B cell (primary cell): ENCODE measurements at regions of chr4 and their contacts with region 1.

Region 1: DNA sequence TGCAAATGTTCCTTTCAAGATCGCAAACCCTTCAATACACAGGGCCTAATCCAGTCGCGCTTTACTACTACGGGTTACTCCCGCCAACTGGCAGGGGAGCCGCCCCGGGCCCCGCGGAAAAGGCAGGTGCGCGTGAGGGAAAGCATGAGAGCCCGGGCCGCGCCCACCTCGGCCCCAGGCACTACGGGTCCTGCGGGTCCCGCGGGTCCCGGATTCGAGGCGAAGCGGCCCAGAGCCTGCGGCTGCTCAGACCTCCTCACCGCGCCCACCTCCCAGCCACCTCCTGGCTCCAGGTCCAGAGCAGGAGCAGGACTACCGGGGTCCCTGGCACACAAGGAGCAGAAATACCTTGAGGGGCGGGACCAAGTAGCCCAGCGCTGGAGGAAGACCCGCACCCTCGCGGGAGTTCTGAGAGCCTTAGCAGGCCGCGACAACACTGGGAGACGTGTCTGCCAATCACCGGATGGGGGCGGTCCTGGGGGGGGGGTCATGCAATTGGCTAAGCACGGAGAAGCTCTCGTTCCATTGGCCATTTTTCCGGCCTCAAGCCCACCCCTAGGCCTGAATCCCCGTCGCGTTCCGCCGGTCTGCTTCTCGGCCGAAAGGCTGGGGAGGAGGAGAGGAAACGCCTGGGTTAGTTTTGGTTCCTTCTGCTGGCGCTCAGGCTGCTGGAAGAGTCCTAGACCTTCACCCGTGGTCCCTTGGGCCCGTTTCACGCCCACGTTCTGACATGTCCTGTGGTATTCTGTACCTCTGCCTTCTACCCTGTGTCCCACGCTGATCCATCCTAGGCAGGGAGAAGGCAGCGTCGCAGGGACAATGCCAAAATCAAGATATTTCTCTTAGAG is 29.0 kb downstream of the ERVMER34-1 start:
- DNase-seq: peak; percentile 96
- ATAC-seq: peak; percentile 92
- H3K4me3 ChIP-seq: peak overlapping the region; percentile 57 to 89 (median 73)
- H3K4me3 Mint-ChIP-seq: peak overlapping the region; percentile 91
- H3K27ac ChIP-seq: peak overlapping the region; percentile 78 to 83
- H3K27ac Mint-ChIP-seq: peak overlapping the region; percentile 92
- H3K4me1 ChIP-seq: peaks cover 4 to 13% of the 10 kb centered on the region in 2 donors
- H3K4me1 Mint-ChIP-seq: peaks cover 16% of the 10 kb centered on the region
- H3K27me3 ChIP-seq: no peaks in the 10 kb centered on the region
- H3K27me3 Mint-ChIP-seq: no peaks in the 10 kb centered on the region
- CTCF ChIP-seq: no peak

Region 2: DNA sequence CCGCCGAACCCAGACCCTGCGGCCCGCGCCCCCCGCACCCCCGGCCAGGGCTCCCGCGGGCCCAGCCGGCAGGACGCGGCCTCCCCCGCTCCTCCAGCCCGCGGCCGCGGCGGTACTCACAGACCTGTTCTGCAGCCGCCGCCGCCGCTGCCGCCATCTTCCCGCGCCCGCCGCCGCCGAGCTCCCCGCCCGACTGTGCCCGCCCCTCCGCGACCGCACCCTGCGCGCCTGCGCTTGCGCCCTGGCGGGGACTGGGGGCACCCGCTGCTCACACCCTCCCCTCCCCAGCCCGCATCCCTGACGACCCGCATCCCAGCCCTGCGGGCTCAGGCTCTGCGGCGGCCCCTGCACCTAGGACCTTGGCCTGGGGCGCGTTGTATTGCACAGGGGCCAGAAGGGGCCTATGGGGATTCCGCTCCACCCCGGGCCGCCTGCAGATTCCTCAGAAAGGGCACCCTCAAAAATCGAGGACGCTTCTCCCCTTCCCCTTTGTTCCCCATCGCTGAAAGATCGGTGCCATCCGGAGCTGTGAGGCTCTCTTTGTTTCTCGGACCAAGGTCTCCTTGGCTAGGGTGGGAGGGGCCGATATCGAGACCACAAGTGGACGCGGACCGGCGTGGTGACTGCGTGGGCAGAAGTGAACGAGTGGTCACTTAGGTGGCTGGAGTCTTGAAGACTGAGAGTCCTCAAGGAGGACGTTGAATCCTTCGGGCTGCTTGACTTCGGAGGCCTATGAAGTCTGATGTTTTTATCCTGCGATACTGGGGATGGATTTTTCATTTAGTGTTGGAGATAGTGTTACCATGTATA is 683.9 kb before region 1 on chr4 and contains the start of gene SGCB:
- CTCF ChIA-PET with region 1: no interaction called
- POLR2A ChIA-PET with region 1: no interaction called
- intact Hi-C with region 1: loop called (anchors 5 kb)
- DNase-seq: peak; percentile 73
- ATAC-seq: peak; percentile 94
- H3K4me3 ChIP-seq: peak within 1 kb of the TSS; percentile 21 to 70 (median 67)
- H3K4me3 Mint-ChIP-seq: peak within 1 kb of the TSS; percentile 84
- H3K27ac ChIP-seq: no peak within 1 kb of the TSS
- H3K27ac Mint-ChIP-seq: peak within 1 kb of the TSS; percentile 71
- H3K4me1 ChIP-seq: peaks cover 11 to 21% of the 10 kb centered on the region in 2 donors
- H3K4me1 Mint-ChIP-seq: peaks cover 29% of the 10 kb centered on the region
- H3K27me3 ChIP-seq: peaks cover 0 to 30% (median 13%) of the 10 kb centered on the region in 4 experiments
- H3K27me3 Mint-ChIP-seq: peaks cover 22% of the 10 kb centered on the region
- CTCF ChIP-seq: no peak
- total RNA-seq, gene SGCB: 9.7 and 12.8 TPM in 2 replicates

Region 3: DNA sequence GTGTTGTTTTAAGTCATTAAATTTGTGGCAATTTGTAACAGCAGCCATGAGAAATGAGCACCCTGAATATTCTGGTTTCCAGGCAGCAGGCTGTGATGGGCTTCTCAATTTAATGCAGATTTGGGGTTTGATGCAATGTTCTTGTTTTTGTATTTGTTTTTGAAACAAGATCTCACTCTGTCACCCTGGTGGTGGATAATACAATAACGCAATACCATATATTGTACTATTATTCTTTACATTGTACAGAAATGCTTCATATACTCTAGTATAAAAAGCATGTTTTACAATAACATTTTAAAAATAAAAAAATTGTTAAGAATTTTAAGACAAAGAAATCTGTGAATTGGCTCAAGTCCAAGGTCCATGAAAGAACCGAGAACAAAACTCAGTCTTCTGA is 192.2 kb before region 1 on chr4:
- CTCF ChIA-PET with region 1: no interaction called
- POLR2A ChIA-PET with region 1: no interaction called
- intact Hi-C with region 1: no loop called
- DNase-seq: no peak
- ATAC-seq: no peak
- H3K4me3 ChIP-seq: no peak overlapping the region
- H3K4me3 Mint-ChIP-seq: no peak overlapping the region
- H3K27ac ChIP-seq: no peak overlapping the region
- H3K27ac Mint-ChIP-seq: no peak overlapping the region
- H3K4me1 ChIP-seq: no peaks in the 10 kb centered on the region
- H3K4me1 Mint-ChIP-seq: no peaks in the 10 kb centered on the region
- H3K27me3 ChIP-seq: no peaks in the 10 kb centered on the region
- H3K27me3 Mint-ChIP-seq: peaks cover 3% of the 10 kb centered on the region
- CTCF ChIP-seq: no peak

Region 4: GRCh38 chr4:52659001-52659721 is 63.0 kb before region 1 on chr4 and contains the start of gene USP46:
- CTCF ChIA-PET with region 1: no interaction called
- POLR2A ChIA-PET with region 1: interaction called, 4 read pairs
- intact Hi-C with region 1: loop called (anchors 1 kb)
- DNase-seq: peak; percentile 70
- ATAC-seq: peak; percentile 90
- H3K4me3 ChIP-seq: peak within 1 kb of the TSS; percentile 52 to 86 (median 77)
- H3K4me3 Mint-ChIP-seq: peak within 1 kb of the TSS; percentile 92
- H3K27ac ChIP-seq: peak within 1 kb of the TSS in 1 of 2 donors; percentile 57
- H3K27ac Mint-ChIP-seq: peak within 1 kb of the TSS; percentile 91
- H3K4me1 ChIP-seq: peaks cover 10 to 14% of the 10 kb centered on the region in 2 donors
- H3K4me1 Mint-ChIP-seq: peaks cover 25% of the 10 kb centered on the region
- H3K27me3 ChIP-seq: no peaks in the 10 kb centered on the region
- H3K27me3 Mint-ChIP-seq: no peaks in the 10 kb centered on the region
- CTCF ChIP-seq: no peak
- total RNA-seq, gene USP46: 10.0 and 11.8 TPM in 2 replicates

Region 5: DNA sequence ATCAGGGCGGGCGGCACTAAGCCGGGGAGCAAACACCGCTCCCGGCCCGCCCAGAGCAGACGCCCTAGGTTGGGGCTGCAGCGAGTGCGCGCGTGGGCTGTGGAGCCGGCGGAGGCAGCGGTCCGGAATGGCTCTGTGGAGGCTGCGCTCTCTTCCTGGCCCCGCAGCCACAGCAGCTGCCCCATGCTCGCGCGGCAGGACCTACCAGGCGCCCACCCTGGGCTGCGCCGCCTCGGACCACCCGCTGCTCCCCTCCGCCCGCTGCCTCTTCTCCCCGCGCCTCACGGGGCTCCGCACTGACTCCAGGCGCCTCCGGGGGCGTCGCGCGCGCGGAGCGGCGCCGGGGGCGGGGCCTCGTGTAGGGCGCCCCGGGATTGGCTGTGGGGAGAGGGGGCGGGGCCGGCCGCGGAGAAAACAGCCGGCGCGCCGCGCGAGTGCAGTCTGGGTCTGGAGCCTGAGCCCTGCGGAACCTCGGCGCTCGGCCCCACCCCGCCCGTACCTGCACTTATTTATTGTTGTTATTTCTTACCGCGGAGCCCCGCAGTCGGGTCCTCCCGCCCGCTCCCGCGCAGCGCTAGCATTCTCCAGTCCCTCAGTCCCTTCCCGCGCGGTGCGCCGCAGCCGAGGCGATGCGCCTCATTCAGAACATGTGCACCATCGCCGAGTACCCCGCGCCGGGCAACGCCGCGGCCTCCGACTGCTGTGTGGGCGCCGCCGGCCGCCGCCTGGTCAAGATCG is 139.9 kb after region 1 on chr4 and contains the start of gene RASL11B:
- CTCF ChIA-PET with region 1: no interaction called
- POLR2A ChIA-PET with region 1: no interaction called
- intact Hi-C with region 1: loop called (anchors 1 kb)
- DNase-seq: peak; percentile 92
- ATAC-seq: peak; percentile 99
- H3K4me3 ChIP-seq: peak within 1 kb of the TSS; percentile 48 to 71 (median 58)
- H3K4me3 Mint-ChIP-seq: peak within 1 kb of the TSS; percentile 89
- H3K27ac ChIP-seq: no peak within 1 kb of the TSS
- H3K27ac Mint-ChIP-seq: no peak within 1 kb of the TSS
- H3K4me1 ChIP-seq: peaks cover 11 to 14% of the 10 kb centered on the region in 2 donors
- H3K4me1 Mint-ChIP-seq: peaks cover 14% of the 10 kb centered on the region
- H3K27me3 ChIP-seq: peaks cover 0 to 37% (median 15%) of the 10 kb centered on the region in 4 experiments
- H3K27me3 Mint-ChIP-seq: peaks cover 40% of the 10 kb centered on the region
- CTCF ChIP-seq: peak; percentile 44
- total RNA-seq, gene RASL11B: 1.2 and 1.3 TPM in 2 replicates

Region 6: GRCh38 chr4:53185869-53186585 is 463.8 kb after region 1 on chr4:
- CTCF ChIA-PET with region 1: no interaction called
- POLR2A ChIA-PET with region 1: no interaction called
- intact Hi-C with region 1: no loop called
- DNase-seq: no peak
- ATAC-seq: no peak
- H3K4me3 ChIP-seq: no peak overlapping the region
- H3K4me3 Mint-ChIP-seq: no peak overlapping the region
- H3K27ac ChIP-seq: no peak overlapping the region
- H3K27ac Mint-ChIP-seq: no peak overlapping the region
- H3K4me1 ChIP-seq: no peaks in the 10 kb centered on the region
- H3K4me1 Mint-ChIP-seq: no peaks in the 10 kb centered on the region
- H3K27me3 ChIP-seq: no peaks in the 10 kb centered on the region
- H3K27me3 Mint-ChIP-seq: no peaks in the 10 kb centered on the region
- CTCF ChIP-seq: no peak

Region 7: DNA sequence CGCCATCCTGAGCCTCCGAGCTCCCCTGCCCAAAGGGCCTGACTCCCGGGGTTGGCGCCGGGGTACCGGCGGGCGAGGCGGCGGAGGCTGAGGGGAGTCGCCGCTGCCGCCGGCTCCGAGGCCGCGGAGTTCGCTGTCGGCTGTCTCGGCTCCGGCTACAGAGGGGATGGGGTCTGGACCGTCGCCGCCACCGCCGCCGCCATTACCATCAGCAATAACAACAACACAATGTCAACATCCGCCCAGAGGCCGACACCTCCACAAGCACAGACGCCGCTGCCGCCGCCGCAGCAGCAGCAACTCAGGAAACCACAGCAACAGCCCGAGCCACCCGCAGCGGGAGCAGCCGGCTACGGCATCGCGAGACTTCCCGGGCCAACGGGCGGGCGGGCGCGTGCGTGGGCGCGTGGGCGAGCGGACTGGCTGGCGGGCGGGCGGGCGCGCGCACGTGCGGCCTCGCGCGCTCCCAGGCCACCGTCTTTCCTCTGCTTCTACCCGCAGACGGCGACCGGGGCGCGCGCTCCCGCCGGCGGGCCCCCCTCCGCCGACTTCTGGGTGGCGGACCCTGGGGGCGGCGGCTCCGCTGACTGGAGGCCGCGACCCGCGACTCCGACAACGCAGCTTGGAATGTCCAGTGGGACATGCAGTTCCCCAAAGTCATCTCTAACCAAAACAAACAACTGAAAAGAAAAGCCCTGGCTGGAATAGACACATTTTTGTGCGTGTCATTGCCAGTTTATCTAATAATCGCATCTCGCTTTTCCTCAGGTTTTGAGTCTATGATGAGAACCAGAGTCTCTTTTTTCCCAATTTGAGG is 1342.3 kb after region 1 on chr4 and contains the start of gene CHIC2:
- CTCF ChIA-PET with region 1: no interaction called
- POLR2A ChIA-PET with region 1: no interaction called
- intact Hi-C with region 1: loop called (anchors 1 kb)
- DNase-seq: peak; percentile 98
- ATAC-seq: peak; percentile 89
- H3K4me3 ChIP-seq: peak within 1 kb of the TSS; percentile 77 to 99 (median 89)
- H3K4me3 Mint-ChIP-seq: peak within 1 kb of the TSS; percentile 95
- H3K27ac ChIP-seq: peak within 1 kb of the TSS; percentile 79 to 98
- H3K27ac Mint-ChIP-seq: peak within 1 kb of the TSS; percentile 95
- H3K4me1 ChIP-seq: peaks cover 17 to 33% of the 10 kb centered on the region in 2 donors
- H3K4me1 Mint-ChIP-seq: peaks cover 39% of the 10 kb centered on the region
- H3K27me3 ChIP-seq: no peaks in the 10 kb centered on the region
- H3K27me3 Mint-ChIP-seq: no peaks in the 10 kb centered on the region
- CTCF ChIP-seq: no peak
- total RNA-seq, gene CHIC2: 34.9 and 37.7 TPM in 2 replicates